CD4-positive, alpha-beta T cell (primary cell): ENCODE measurements at regions of chr2 and their contacts with region 1.

Region 1: GRCh38 chr2:234288974-234289455 is 207.9 kb downstream of the ARL4C start:
- DNase-seq: peak; percentile 62 to 90 (median 72)
- ATAC-seq: peak; percentile 3
- H3K4me3 ChIP-seq: no peak overlapping the region
- H3K4me3 Mint-ChIP-seq: peak overlapping the region; percentile 31
- H3K27ac ChIP-seq: peak overlapping the region; percentile 96 to 99
- H3K27ac Mint-ChIP-seq: peak overlapping the region; percentile 98
- H3K4me1 ChIP-seq: peaks cover 54% of the 10 kb centered on the region
- H3K4me1 Mint-ChIP-seq: peaks cover 57% of the 10 kb centered on the region
- H3K27me3 ChIP-seq: no peaks in the 10 kb centered on the region
- H3K27me3 Mint-ChIP-seq: no peaks in the 10 kb centered on the region
- CTCF ChIP-seq: peak; percentile 88

Region 2: DNA sequence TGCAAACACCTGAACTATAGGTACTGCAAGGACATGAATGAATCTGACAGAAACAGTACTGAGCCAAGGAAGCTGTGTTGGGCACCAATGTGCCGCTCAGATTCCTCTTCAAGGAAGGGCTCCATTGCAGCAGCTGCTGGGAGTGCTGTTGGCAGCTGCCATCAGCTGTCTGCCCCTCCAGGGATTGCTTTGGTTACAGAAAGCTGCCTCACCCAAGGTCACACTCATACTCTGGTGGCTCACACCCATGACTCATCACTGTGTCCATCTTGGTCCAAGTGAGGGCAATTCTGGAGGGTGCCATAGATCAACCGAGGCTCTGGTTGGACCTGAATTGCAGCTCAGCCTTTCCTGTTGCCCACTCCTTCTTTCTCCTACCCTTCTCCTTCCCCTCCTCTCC is 396.2 kb before region 1 on chr2:
- CTCF ChIA-PET with region 1: no interaction called
- POLR2A ChIA-PET with region 1: no interaction called
- intact Hi-C with region 1: no loop called
- DNase-seq: no peak
- ATAC-seq: no peak
- H3K4me3 ChIP-seq: no peak overlapping the region
- H3K4me3 Mint-ChIP-seq: no peak overlapping the region
- H3K27ac ChIP-seq: no peak overlapping the region
- H3K27ac Mint-ChIP-seq: no peak overlapping the region
- H3K4me1 ChIP-seq: no peaks in the 10 kb centered on the region
- H3K4me1 Mint-ChIP-seq: no peaks in the 10 kb centered on the region
- H3K27me3 ChIP-seq: peaks cover 10 to 14% of the 10 kb centered on the region in 2 experiments
- H3K27me3 Mint-ChIP-seq: peaks cover 51% of the 10 kb centered on the region
- CTCF ChIP-seq: no peak

Region 3: GRCh38 chr2:233990261-233990798 is 298.7 kb before region 1 on chr2:
- CTCF ChIA-PET with region 1: no interaction called
- POLR2A ChIA-PET with region 1: interaction called, 4 read pairs
- intact Hi-C with region 1: loop called in 1 of 2 experiments (anchors 10 kb)
- DNase-seq: peak in 13 of 14 experiments; percentile 9 to 94 (median 48)
- ATAC-seq: peak; percentile 89
- H3K4me3 ChIP-seq: peak overlapping the region; percentile 6
- H3K4me3 Mint-ChIP-seq: peak overlapping the region; percentile 12
- H3K27ac ChIP-seq: peak overlapping the region in 1 of 2 donors; percentile 20
- H3K27ac Mint-ChIP-seq: peak overlapping the region; percentile 74
- H3K4me1 ChIP-seq: peaks cover 55% of the 10 kb centered on the region
- H3K4me1 Mint-ChIP-seq: peaks cover 59% of the 10 kb centered on the region
- H3K27me3 ChIP-seq: no peaks in the 10 kb centered on the region
- H3K27me3 Mint-ChIP-seq: no peaks in the 10 kb centered on the region
- CTCF ChIP-seq: no peak

Region 4: DNA sequence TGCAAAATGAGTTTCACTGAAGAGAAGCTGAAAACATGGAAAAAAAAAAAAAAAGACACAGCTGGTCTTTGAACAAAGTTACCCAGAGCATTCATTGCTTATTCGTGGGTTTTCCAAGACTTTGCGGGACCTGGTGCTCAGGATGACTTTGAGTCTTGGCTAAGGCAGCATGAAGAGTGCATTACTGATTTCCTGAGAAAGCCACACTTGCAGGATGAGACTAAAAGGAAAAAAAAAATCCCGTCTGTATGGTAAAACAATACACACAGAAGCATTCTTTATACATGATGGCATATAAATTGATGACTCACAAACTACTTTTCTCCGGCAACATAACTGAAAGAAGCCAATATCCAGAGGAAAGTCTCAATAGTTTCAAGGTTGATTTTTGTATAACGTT is 43.1 kb before region 1 on chr2:
- CTCF ChIA-PET with region 1: no interaction called
- POLR2A ChIA-PET with region 1: no interaction called
- intact Hi-C with region 1: no loop called
- DNase-seq: no peak
- ATAC-seq: no peak
- H3K4me3 ChIP-seq: no peak overlapping the region
- H3K4me3 Mint-ChIP-seq: no peak overlapping the region
- H3K27ac ChIP-seq: no peak overlapping the region
- H3K27ac Mint-ChIP-seq: no peak overlapping the region
- H3K4me1 ChIP-seq: no peaks in the 10 kb centered on the region
- H3K4me1 Mint-ChIP-seq: peaks cover 9% of the 10 kb centered on the region
- H3K27me3 ChIP-seq: no peaks in the 10 kb centered on the region
- H3K27me3 Mint-ChIP-seq: no peaks in the 10 kb centered on the region
- CTCF ChIP-seq: no peak

Region 5: DNA sequence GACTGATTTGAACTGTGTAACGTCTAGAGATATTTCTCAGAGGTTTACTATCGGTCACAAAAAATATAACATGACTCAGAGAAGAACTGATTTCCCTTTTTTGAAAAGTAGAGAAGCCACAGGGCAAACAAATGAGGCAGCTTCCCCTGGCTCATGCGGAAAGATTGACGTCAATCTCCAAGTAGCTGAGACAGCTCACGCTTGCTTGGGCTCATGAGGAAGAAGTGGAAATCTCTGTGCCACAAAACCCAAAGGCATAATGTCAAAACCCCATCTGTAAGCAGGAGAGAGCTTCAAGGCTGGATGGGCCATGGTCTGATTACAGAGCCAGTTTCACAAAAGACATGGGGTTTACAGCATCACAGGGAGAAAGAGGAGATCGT is 19.8 kb after region 1 on chr2:
- CTCF ChIA-PET with region 1: interaction called, 13 read pairs
- POLR2A ChIA-PET with region 1: interaction called, 21 read pairs
- intact Hi-C with region 1: loop called in 1 of 2 experiments (anchors 1 kb)
- DNase-seq: peak; percentile 39 to 94 (median 56)
- ATAC-seq: peak; percentile 86
- H3K4me3 ChIP-seq: no peak overlapping the region
- H3K4me3 Mint-ChIP-seq: peak overlapping the region; percentile 68
- H3K27ac ChIP-seq: peak overlapping the region; percentile 50 to 56
- H3K27ac Mint-ChIP-seq: peak overlapping the region; percentile 88
- H3K4me1 ChIP-seq: peaks cover 25% of the 10 kb centered on the region
- H3K4me1 Mint-ChIP-seq: peaks cover 62% of the 10 kb centered on the region
- H3K27me3 ChIP-seq: no peaks in the 10 kb centered on the region
- H3K27me3 Mint-ChIP-seq: no peaks in the 10 kb centered on the region
- CTCF ChIP-seq: no peak

Region 6: DNA sequence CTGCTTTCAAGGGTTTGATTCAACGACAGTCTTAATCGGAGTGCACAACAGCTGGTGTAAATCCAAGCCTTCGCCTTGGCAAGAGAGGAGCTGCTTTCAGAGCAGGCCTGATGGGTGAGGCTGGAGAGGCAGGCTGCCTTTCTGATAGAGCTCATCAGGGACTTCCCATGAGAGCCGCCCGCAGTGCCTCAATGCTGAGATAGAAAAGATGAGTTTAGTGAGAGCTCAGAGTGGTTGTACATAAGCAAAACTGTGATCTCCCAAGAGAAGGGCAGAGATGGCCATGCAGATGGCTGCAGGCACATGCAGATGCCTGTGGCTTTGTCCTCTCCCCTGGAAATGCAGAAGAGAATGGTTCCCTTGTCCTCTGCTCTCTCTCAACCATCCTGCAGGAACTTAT is 85.7 kb after region 1 on chr2:
- CTCF ChIA-PET with region 1: interaction called, 3 read pairs
- POLR2A ChIA-PET with region 1: interaction called, 25 read pairs
- intact Hi-C with region 1: loop called (anchors 5 kb)
- DNase-seq: no peak
- ATAC-seq: no peak
- H3K4me3 ChIP-seq: no peak overlapping the region
- H3K4me3 Mint-ChIP-seq: no peak overlapping the region
- H3K27ac ChIP-seq: no peak overlapping the region
- H3K27ac Mint-ChIP-seq: peak overlapping the region; percentile 88
- H3K4me1 ChIP-seq: peaks cover 39% of the 10 kb centered on the region
- H3K4me1 Mint-ChIP-seq: peaks cover 59% of the 10 kb centered on the region
- H3K27me3 ChIP-seq: no peaks in the 10 kb centered on the region
- H3K27me3 Mint-ChIP-seq: no peaks in the 10 kb centered on the region
- CTCF ChIP-seq: no peak

Region 7: GRCh38 chr2:234451852-234452625 is 163.0 kb after region 1 on chr2:
- CTCF ChIA-PET with region 1: interaction called, 4 read pairs
- POLR2A ChIA-PET with region 1: interaction called, 222 read pairs
- intact Hi-C with region 1: loop called in 1 of 2 experiments (anchors 2 kb)
- DNase-seq: peak in 4 of 14 experiments; percentile 20 to 64 (median 54)
- ATAC-seq: peak; percentile 10
- H3K4me3 ChIP-seq: peak overlapping the region; percentile 64
- H3K4me3 Mint-ChIP-seq: peak overlapping the region; percentile 89
- H3K27ac ChIP-seq: peak overlapping the region; percentile 56 to 93
- H3K27ac Mint-ChIP-seq: peak overlapping the region; percentile 92
- H3K4me1 ChIP-seq: peaks cover 73% of the 10 kb centered on the region
- H3K4me1 Mint-ChIP-seq: peaks cover 89% of the 10 kb centered on the region
- H3K27me3 ChIP-seq: no peaks in the 10 kb centered on the region
- H3K27me3 Mint-ChIP-seq: peaks cover 5% of the 10 kb centered on the region
- CTCF ChIP-seq: no peak

Region 8: GRCh38 chr2:234488913-234489451 is 200.0 kb after region 1 on chr2:
- CTCF ChIA-PET with region 1: interaction called, 17 read pairs
- POLR2A ChIA-PET with region 1: interaction called, 211 read pairs
- intact Hi-C with region 1: loop called in 1 of 2 experiments (anchors 1 kb)
- DNase-seq: peak; percentile 55 to 94 (median 69)
- ATAC-seq: peak; percentile 69
- H3K4me3 ChIP-seq: peak overlapping the region; percentile 94
- H3K4me3 Mint-ChIP-seq: peak overlapping the region; percentile 82
- H3K27ac ChIP-seq: peak overlapping the region; percentile 70 to 96
- H3K27ac Mint-ChIP-seq: peak overlapping the region; percentile 98
- H3K4me1 ChIP-seq: peaks cover 75% of the 10 kb centered on the region
- H3K4me1 Mint-ChIP-seq: peaks cover 92% of the 10 kb centered on the region
- H3K27me3 ChIP-seq: no peaks in the 10 kb centered on the region
- H3K27me3 Mint-ChIP-seq: no peaks in the 10 kb centered on the region
- CTCF ChIP-seq: no peak